ENCODE measurements at regions of chr15 and their contacts with region 1.

Region 1: DNA sequence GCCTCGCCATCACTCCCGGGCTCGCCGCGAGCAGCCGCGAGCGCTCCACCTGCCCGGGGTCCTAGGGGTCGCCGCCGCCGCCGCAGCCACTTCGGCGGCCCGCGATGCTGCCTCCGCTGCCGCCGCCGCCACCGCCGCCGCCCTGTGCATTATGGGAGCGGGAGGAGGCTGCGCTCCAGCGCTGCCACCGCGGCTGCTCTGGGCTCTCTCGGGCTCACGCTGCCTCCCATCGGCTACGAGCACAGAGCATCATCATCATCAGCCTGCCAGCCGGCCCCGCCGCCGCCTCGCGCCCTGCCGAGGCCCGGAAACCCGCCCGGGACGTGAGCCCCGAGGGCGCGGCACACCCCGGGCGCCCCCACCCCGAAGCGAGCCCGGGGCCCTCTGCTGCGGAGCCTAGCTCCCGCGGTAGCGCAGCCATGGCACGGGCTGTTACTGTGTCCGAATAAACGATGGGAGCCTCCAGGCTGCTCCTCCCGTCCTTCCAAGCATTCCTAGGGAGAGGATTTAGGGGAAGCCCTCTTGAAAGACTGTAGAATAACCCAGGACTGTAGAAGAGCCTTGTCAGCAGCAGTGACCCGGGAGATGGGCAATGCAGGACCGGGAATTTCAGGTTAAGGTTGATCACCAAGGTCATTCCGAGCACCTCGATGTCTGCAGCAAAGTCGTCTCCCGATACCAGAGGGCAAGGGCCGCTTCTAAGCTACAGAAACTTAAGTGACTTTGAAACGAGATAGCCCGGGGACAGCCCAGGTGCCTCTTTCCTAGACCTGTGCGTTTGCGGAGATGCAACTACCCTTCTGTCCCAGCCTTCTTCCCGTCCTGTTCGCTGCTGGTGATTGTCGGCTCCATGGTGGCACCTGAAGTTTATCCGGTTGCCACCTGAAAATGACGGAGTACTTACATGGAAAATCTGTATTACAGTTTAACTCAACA is 579 bp upstream of the MYO5A start:
- DNase-seq: peak; percentile 72 to 87 (median 78)
- ATAC-seq: peak; percentile 74 to 93 (median 90)
- H3K4me3 ChIP-seq: peak overlapping the region; percentile 70 to 95 (median 80)
- H3K27ac ChIP-seq: peak overlapping the region in 11 of 12 donors; percentile 62 to 93 (median 81)
- H3K4me1 ChIP-seq: peaks cover 0 to 33% (median 15%) of the 10 kb centered on the region in 12 donors
- H3K27me3 ChIP-seq: peaks cover 0 to 8% (median 0%) of the 10 kb centered on the region in 9 donors
- CTCF ChIP-seq: peak in 5 of 12 donors; percentile 4 to 34 (median 8)
- POLR2A ChIP-seq: no peak

Region 2: GRCh38 chr15:52018693-52019387 is 510.4 kb before region 1 on chr15 and contains the start of gene MAPK6:
- intact Hi-C with region 1: loop called in 1 of 10 experiments (anchors 10 kb)
- DNase-seq: peak; percentile 93 to 97 (median 95)
- ATAC-seq: peak; percentile 90 to 96 (median 95)
- H3K4me3 ChIP-seq: peak within 1 kb of the TSS; percentile 60 to 89 (median 69)
- H3K27ac ChIP-seq: peak within 1 kb of the TSS; percentile 91 to 96 (median 93)
- H3K4me1 ChIP-seq: peaks cover 5 to 49% (median 33%) of the 10 kb centered on the region in 12 donors
- H3K27me3 ChIP-seq: no peaks in the 10 kb centered on the region
- CTCF ChIP-seq: no peak
- POLR2A ChIP-seq: peak; percentile 32 to 83
- total RNA-seq, gene MAPK6: 10.4 to 26.2 (median 18.2) TPM

Region 3: GRCh38 chr15:52256366-52256765 is 272.9 kb before region 1 on chr15:
- intact Hi-C with region 1: loop called in 1 of 10 experiments (anchors 5 kb)
- DNase-seq: peak in 4 of 5 donors; percentile 38 to 66 (median 60)
- ATAC-seq: peak; percentile 41 to 67 (median 54)
- H3K4me3 ChIP-seq: peak overlapping the region in 1 of 12 donors; percentile 3
- H3K27ac ChIP-seq: no peak overlapping the region
- H3K4me1 ChIP-seq: peaks cover 0 to 26% (median 12%) of the 10 kb centered on the region in 12 donors
- H3K27me3 ChIP-seq: no peaks in the 10 kb centered on the region
- CTCF ChIP-seq: peak; percentile 67 to 83 (median 74)
- POLR2A ChIP-seq: no peak

Region 4: GRCh38 chr15:52440400-52440799 is 88.9 kb before region 1 on chr15:
- intact Hi-C with region 1: loop called in 1 of 10 experiments (anchors 10 kb)
- DNase-seq: no peak
- ATAC-seq: no peak
- H3K4me3 ChIP-seq: no peak overlapping the region
- H3K27ac ChIP-seq: peak overlapping the region in 1 of 12 donors; percentile 63
- H3K4me1 ChIP-seq: peaks cover 0 to 64% (median 17%) of the 10 kb centered on the region in 12 donors
- H3K27me3 ChIP-seq: no peaks in the 10 kb centered on the region
- CTCF ChIP-seq: no peak
- POLR2A ChIP-seq: no peak

Region 5: DNA sequence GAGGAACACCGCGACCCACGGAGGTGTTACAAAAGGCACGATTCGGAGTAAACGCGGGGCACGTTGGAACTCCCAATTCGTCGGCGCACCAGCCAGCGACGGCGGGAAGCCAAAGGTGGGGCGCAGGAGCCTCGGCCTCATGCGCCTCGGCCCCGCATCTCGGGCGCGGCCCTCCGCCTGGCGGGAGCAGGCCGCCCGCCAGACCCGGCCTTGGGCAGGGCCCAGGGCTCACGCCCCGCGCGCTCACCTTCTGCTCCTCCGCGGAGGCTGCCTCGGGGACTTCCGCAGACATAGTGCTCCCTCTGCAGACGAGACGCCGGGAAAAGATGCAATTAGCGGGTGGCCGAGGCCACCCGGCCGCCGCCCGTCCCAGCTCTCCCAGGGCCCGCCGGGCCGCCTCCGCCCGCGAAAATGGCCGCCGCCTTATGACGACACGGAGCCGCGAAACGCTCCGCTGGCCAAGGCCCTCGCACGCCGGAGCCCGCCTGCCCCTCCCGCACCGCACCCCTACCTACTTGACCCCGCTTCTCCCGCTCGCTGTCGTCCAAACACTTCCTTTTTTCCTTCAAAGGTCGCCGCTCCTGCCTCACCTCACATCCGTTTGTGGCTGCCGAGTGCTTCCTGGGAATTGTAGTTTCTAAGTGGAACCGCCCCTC is 39.5 kb after region 1 on chr15 and contains the start of gene ARPP19:
- intact Hi-C with region 1: loop called in 1 of 10 experiments (anchors 5 kb)
- DNase-seq: peak; percentile 88 to 94 (median 90)
- ATAC-seq: peak; percentile 80 to 96 (median 92)
- H3K4me3 ChIP-seq: peak within 1 kb of the TSS; percentile 63 to 94 (median 77)
- H3K27ac ChIP-seq: peak within 1 kb of the TSS; percentile 78 to 96 (median 94)
- H3K4me1 ChIP-seq: peaks cover 2 to 49% (median 33%) of the 10 kb centered on the region in 12 donors
- H3K27me3 ChIP-seq: no peaks in the 10 kb centered on the region
- CTCF ChIP-seq: peak in 8 of 12 donors; percentile 9 to 49 (median 21)
- POLR2A ChIP-seq: peak in 1 of 2 donors; percentile 76
- total RNA-seq, gene ARPP19: 77.2 to 182 (median 147) TPM

Region 6: GRCh38 chr15:52579852-52580251 is 50.6 kb after region 1 on chr15:
- intact Hi-C with region 1: no loop called
- DNase-seq: no peak
- ATAC-seq: no peak
- H3K4me3 ChIP-seq: no peak overlapping the region
- H3K27ac ChIP-seq: no peak overlapping the region
- H3K4me1 ChIP-seq: no peaks in the 10 kb centered on the region
- H3K27me3 ChIP-seq: no peaks in the 10 kb centered on the region
- CTCF ChIP-seq: no peak
- POLR2A ChIP-seq: no peak

Measured in heart left ventricle (tissue), 16 donors.